ENCODE measurements at regions of chr1 and their contacts with region 1.

Region 1: GRCh38 chr1:151281969-151282882 is at the start of gene ZNF687:
- DNase-seq: peak; percentile 99
- H3K4me3 Mint-ChIP-seq: peak within 1 kb of the TSS; percentile 94
- H3K27ac Mint-ChIP-seq: peak within 1 kb of the TSS; percentile 98
- H3K4me1 Mint-ChIP-seq: peaks cover 28% of the 10 kb centered on the region
- H3K27me3 Mint-ChIP-seq: no peaks in the 10 kb centered on the region
- total RNA-seq, gene ZNF687: 27.1 to 27.2 TPM

Region 2: DNA sequence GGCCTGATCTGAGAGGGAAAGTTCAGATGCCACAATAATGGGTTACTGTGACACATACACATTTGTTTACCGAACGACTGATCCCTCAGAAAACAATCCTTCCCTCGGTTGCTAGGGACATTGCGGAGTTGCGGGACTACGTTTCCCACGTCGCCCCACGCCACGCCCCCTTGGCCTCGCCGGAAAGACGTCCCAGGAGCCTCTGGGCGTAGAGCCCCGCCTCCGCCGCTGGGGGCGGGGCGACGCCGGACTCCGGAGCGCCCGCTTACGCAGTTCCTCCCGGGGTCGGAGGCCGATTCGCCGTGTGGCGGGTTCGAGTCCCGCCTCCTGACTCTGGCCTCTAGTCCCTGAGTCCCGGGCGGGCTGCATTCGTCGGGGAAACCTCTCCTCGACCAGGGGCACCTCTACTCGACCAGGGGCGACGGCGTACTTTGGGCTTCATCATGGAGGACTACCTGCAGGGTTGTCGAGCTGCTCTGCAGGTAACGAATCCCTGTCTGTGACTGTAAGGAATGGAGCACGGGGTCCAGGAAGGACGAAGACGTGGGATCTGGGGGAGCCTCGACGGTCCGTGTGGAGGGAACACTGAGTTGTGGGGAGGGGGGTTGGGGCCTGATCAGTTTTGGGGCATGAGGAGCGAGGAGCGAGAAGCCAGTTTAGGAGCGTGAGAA is 273.9 kb before region 1 on chr1 and contains the start of gene PRUNE1:
- CTCF ChIA-PET with region 1: no interaction called
- POLR2A ChIA-PET with region 1: no interaction called
- intact Hi-C with region 1: loop called (anchors 1 kb)
- DNase-seq: peak; percentile 97
- H3K4me3 Mint-ChIP-seq: peak within 1 kb of the TSS; percentile 99
- H3K27ac Mint-ChIP-seq: peak within 1 kb of the TSS; percentile 97
- H3K4me1 Mint-ChIP-seq: peaks cover 64% of the 10 kb centered on the region
- H3K27me3 Mint-ChIP-seq: no peaks in the 10 kb centered on the region
- total RNA-seq, gene PRUNE1: 12.5 to 17.5 TPM

Region 3: DNA sequence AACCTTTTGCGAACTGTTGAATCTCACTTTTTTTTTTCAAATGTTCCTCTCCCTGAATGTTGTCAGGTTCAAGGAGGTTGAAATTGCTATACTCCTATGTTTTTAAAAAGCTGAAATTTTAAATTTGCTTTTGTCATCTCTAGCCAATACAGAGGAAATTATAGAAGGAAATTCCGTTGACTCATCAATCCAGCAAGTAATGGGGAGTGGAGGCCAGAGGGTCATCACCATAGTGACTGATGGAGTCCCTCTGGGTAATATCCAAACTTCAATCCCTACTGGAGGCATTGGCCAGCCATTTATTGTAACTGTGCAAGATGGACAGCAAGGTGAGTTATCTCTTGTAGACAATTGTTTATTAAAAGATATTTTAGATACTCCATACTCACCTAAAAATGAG is 175.3 kb before region 1 on chr1:
- CTCF ChIA-PET with region 1: no interaction called
- POLR2A ChIA-PET with region 1: no interaction called
- intact Hi-C with region 1: no loop called
- DNase-seq: no peak
- H3K4me3 Mint-ChIP-seq: no peak overlapping the region
- H3K27ac Mint-ChIP-seq: no peak overlapping the region
- H3K4me1 Mint-ChIP-seq: no peaks in the 10 kb centered on the region
- H3K27me3 Mint-ChIP-seq: no peaks in the 10 kb centered on the region

Region 4: DNA sequence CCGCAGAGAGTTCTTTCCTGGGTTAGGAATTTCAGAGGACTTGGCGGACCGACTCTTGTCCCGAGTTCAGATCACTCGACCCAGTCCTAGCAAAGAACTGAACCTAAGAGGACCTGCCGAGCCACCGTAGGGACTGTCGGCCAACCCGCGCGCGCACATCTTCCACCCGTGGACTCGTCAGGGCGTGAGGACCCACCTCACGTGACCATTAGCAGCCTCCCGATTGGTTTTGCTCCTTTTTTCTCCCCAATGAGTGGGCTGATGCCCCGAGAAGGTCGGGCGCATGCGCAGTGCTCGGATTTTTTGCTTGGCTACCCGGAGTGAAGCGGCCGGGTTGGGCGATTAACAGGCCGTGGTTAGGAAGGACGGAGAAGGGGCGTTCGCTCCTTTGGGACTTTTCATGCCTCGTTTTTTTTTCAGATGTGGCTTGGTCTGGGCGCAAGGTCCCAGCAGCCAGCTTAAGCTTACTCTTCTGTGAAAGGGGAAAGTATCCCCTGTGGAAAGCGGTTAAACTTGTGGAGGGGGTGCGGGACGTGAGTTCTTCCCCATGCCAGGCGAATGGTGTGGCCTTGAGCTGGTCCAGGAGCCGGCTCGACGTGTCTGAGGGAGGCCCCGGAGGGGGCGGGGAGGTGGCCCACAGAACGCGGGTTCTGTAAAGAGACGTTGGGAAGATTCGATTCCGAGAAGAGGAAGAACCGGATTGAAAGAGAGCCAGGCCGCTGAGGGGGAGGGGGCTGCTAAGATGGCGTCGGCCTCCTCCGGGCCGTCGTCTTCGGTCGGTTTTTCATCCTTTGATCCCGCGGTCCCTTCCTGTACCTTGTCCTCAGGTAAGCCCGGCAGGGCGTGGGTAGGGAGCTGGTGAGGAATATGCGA is 83.7 kb before region 1 on chr1 and contains the start of gene PIP5K1A:
- CTCF ChIA-PET with region 1: interaction called, 3 read pairs
- POLR2A ChIA-PET with region 1: interaction called, 7 read pairs
- intact Hi-C with region 1: loop called (anchors 1 kb)
- DNase-seq: peak; percentile 99
- H3K4me3 Mint-ChIP-seq: peak within 1 kb of the TSS; percentile 99
- H3K27ac Mint-ChIP-seq: peak within 1 kb of the TSS; percentile 96
- H3K4me1 Mint-ChIP-seq: peaks cover 37% of the 10 kb centered on the region
- H3K27me3 Mint-ChIP-seq: no peaks in the 10 kb centered on the region
- total RNA-seq, gene PIP5K1A: 78.6 to 84.3 TPM

Region 5: DNA sequence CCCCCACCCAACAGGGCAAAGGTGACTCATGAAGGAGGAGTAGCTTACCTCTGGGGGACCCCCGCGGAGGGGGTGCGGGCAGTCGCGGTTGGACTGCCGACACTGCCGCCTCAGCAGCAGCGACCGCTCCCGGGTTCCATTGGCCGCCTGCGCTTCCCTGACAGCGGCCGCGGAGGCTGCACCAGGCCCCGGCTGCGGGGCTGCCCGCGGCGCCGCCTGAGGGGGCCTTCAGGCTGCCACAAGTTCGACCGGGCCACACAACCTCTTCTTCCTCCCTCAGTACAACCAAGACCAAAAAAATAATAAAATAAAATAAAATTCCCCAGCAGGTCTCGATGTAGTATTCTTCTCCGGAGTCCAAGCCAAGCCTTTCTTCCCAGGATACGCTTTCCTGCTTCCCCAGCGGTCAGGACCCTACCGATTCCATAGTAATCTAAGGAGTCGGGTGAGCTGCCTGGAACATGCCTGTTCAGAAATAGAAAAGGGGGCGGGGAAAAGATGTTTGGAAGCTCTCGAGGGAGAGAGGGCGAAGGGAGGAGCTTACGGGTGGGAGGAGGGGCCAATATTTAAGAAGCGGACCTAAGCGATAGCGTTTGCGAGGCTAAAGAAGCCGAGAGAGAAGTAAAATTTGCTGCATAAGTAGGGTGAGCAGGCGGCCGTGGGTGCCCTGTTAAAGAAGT is 45.1 kb after region 1 on chr1 and contains the start of gene PI4KB:
- CTCF ChIA-PET with region 1: interaction called, 7 read pairs
- POLR2A ChIA-PET with region 1: interaction called, 7 read pairs
- intact Hi-C with region 1: loop called (anchors 1 kb)
- DNase-seq: peak; percentile 93
- H3K4me3 Mint-ChIP-seq: peak within 1 kb of the TSS; percentile 95
- H3K27ac Mint-ChIP-seq: peak within 1 kb of the TSS; percentile 89
- H3K4me1 Mint-ChIP-seq: peaks cover 32% of the 10 kb centered on the region
- H3K27me3 Mint-ChIP-seq: no peaks in the 10 kb centered on the region
- total RNA-seq, gene PI4KB: 54.7 to 62.9 TPM

Region 6: GRCh38 chr1:151399890-151400495 is 117.8 kb after region 1 on chr1:
- CTCF ChIA-PET with region 1: no interaction called
- POLR2A ChIA-PET with region 1: interaction called, 17 read pairs
- intact Hi-C with region 1: loop called (anchors 1 kb)
- DNase-seq: peak; percentile 37
- H3K4me3 Mint-ChIP-seq: peak overlapping the region; percentile 88
- H3K27ac Mint-ChIP-seq: peak overlapping the region; percentile 95
- H3K4me1 Mint-ChIP-seq: peaks cover 29% of the 10 kb centered on the region
- H3K27me3 Mint-ChIP-seq: no peaks in the 10 kb centered on the region

Region 7: GRCh38 chr1:151520359-151520758 is 238.1 kb after region 1 on chr1:
- CTCF ChIA-PET with region 1: no interaction called
- POLR2A ChIA-PET with region 1: no interaction called
- intact Hi-C with region 1: no loop called
- DNase-seq: no peak
- H3K4me3 Mint-ChIP-seq: no peak overlapping the region
- H3K27ac Mint-ChIP-seq: no peak overlapping the region
- H3K4me1 Mint-ChIP-seq: no peaks in the 10 kb centered on the region
- H3K27me3 Mint-ChIP-seq: no peaks in the 10 kb centered on the region

Region 8: GRCh38 chr1:151839457-151840405 is 557.5 kb after region 1 on chr1 and contains the start of gene C2CD4D:
- CTCF ChIA-PET with region 1: no interaction called
- POLR2A ChIA-PET with region 1: no interaction called
- intact Hi-C with region 1: loop called (anchors 2 kb)
- DNase-seq: peak; percentile 86
- H3K4me3 Mint-ChIP-seq: peak within 1 kb of the TSS; percentile 89
- H3K27ac Mint-ChIP-seq: peak within 1 kb of the TSS; percentile 91
- H3K4me1 Mint-ChIP-seq: peaks cover 43% of the 10 kb centered on the region
- H3K27me3 Mint-ChIP-seq: no peaks in the 10 kb centered on the region
- total RNA-seq, gene C2CD4D: 3.3 to 3.9 TPM